Uterus (tissue), 4 donors: ENCODE measurements at regions of chr9 and their contacts with region 1.

Region 1: DNA sequence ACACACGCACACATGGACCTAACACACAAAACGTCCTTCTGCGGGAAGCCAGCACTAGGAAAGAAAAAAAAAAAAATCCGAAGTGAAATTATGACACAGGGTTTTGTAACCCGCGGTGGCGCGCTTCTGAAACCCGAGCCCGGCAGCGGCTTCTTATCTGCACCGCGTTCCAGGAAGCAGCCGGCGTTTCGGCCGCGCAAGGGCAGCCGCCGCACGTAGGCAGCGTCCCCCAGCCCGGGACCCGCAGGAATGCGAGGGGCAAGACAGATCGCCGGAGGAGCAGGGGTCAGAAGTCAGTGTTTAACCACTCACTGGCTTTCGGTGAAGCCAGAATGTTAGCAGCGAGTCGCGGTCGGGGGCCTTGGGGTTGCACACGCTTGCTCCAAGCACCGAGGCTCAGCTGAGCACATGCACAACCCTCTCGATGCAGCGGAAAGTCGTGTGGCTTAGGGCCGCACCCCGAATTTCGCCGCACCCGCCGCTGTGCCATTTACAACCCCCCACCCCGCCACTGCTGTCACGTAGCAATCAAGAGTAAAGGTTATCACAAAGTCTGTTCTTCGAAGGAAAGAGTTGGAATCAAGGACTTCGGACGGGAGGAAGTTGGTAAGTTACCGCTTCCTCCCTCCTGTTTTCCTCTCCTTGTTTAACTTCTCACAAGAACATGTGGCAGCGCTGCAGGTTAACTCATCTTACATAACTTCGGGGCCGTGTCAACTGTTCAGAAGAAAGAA is 167.9 kb downstream of the AUH start:
- DNase-seq: peak; percentile 83 to 87
- H3K4me3 ChIP-seq: peak overlapping the region; percentile 36 to 43
- H3K27ac ChIP-seq: peak overlapping the region; percentile 100
- H3K4me1 ChIP-seq: peaks cover 11 to 16% of the 10 kb centered on the region in 2 donors
- H3K27me3 ChIP-seq: no peaks in the 10 kb centered on the region
- CTCF ChIP-seq: no peak
- POLR2A ChIP-seq: peak; percentile 23 to 57

Region 2: GRCh38 chr9:91043056-91043810 is 150.6 kb before region 1 on chr9:
- intact Hi-C with region 1: loop called (anchors 5 kb)
- DNase-seq: peak; percentile 82 to 94
- H3K4me3 ChIP-seq: no peak overlapping the region
- H3K27ac ChIP-seq: peak overlapping the region; percentile 91 to 93
- H3K4me1 ChIP-seq: peaks cover 8 to 11% of the 10 kb centered on the region in 2 donors
- H3K27me3 ChIP-seq: no peaks in the 10 kb centered on the region
- CTCF ChIP-seq: peak in 2 of 4 experiments; percentile 36 to 59
- POLR2A ChIP-seq: no peak

Region 3: DNA sequence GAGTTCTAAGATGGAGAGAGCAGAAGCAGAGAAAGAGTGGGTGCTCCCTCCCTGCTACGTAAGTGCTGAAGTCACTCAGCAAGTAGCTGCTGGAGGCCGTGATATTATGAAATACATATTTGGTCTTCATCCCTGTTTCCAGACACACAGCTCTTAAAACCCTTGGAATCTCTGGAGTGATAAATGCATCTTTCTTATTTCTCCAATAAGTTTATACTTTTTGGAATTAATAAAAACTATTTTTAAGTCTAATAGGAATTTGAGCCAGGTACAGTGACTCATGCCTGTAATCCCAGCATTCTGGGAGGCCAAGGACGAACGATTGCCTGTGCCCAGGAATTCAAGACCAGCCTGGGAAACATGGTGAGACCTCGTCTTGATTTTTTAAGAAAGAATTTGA is 107.3 kb after region 1 on chr9:
- intact Hi-C with region 1: no loop called
- DNase-seq: no peak
- H3K4me3 ChIP-seq: no peak overlapping the region
- H3K27ac ChIP-seq: peak overlapping the region; percentile 73 to 86
- H3K4me1 ChIP-seq: peaks cover 0 to 7% of the 10 kb centered on the region in 2 donors
- H3K27me3 ChIP-seq: no peaks in the 10 kb centered on the region
- CTCF ChIP-seq: no peak
- POLR2A ChIP-seq: no peak

Region 4: DNA sequence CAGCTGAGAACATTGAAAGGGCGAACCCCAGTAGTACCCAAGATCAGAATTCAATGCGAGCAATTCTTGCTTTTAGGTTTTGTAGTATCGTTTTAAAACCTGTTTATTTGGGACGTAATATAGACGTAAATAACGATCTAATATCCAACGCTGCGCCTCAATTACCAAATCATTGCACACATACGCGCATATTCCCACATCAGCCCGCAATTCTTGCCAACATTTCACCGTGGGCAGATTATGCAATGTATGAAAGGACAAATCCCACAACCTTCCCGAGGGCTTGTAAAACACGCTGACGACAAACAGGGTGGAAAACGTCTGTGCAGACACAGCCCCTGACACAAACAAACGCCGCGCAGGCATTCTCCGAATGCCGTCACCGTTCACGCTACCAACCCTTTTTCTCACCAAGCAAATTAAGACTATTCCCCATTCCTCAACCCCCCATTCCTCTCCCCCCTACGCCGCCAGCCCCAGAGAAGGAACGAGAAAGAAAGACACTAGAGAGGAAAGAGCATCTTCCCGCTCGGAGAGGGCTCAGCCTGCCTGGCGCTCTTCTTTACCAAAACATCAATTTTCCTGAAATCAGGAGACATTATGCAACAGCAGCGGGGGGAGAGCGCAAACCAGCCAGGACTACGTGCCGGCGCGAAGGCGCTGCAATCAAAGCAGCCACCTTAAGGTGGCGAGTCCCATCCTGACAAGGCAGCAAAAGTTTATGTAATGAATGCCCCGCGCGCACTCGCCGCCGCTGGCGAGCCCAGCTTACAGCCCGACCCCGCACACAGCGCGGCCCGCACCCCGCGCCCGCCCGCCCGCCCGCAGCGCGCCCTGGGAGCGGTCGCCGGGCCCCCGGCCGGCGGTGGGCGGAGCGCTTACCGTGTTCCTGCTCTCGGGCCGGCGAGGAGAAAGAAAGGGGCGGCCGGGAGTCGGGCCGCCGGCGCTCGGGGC is 229.2 kb after region 1 on chr9:
- intact Hi-C with region 1: loop called (anchors 5 kb)
- DNase-seq: peak; percentile 75 to 80
- H3K4me3 ChIP-seq: peak overlapping the region; percentile 72 to 76
- H3K27ac ChIP-seq: peak overlapping the region; percentile 90 to 98
- H3K4me1 ChIP-seq: no peaks in the 10 kb centered on the region
- H3K27me3 ChIP-seq: no peaks in the 10 kb centered on the region
- CTCF ChIP-seq: peak in 2 of 4 experiments; percentile 40 to 45
- POLR2A ChIP-seq: peak in 1 of 2 donors; percentile 45

Region 5: GRCh38 chr9:91515074-91515687 is 321.4 kb after region 1 on chr9:
- intact Hi-C with region 1: no loop called
- DNase-seq: peak; percentile 76 to 91
- H3K4me3 ChIP-seq: peak overlapping the region in 1 of 2 donors; percentile 18
- H3K27ac ChIP-seq: peak overlapping the region; percentile 77 to 80
- H3K4me1 ChIP-seq: no peaks in the 10 kb centered on the region
- H3K27me3 ChIP-seq: no peaks in the 10 kb centered on the region
- CTCF ChIP-seq: no peak
- POLR2A ChIP-seq: no peak

Region 6: GRCh38 chr9:91690540-91691253 is 496.9 kb after region 1 on chr9:
- intact Hi-C with region 1: no loop called
- DNase-seq: no peak
- H3K4me3 ChIP-seq: no peak overlapping the region
- H3K27ac ChIP-seq: no peak overlapping the region
- H3K4me1 ChIP-seq: no peaks in the 10 kb centered on the region
- H3K27me3 ChIP-seq: no peaks in the 10 kb centered on the region
- CTCF ChIP-seq: no peak
- POLR2A ChIP-seq: no peak